HepG2 (cell line): ENCODE measurements at regions of chr16 and their contacts with region 1.

Region 1: GRCh38 chr16:87806603-87807546 is 41.1 kb upstream of the KLHDC4 start:
- DNase-seq: peak; percentile 61
- ATAC-seq: peak; percentile 71
- H3K4me3 ChIP-seq: peak overlapping the region; percentile 38 to 66 (median 50)
- H3K27ac ChIP-seq: peak overlapping the region; percentile 23
- H3K4me1 ChIP-seq: peaks cover 62% of the 10 kb centered on the region
- H3K27me3 ChIP-seq: peaks cover 0 to 11% of the 10 kb centered on the region in 2 experiments; a peak in 3 of 5 replicates
- CTCF ChIP-seq: no peak
- EP300 ChIP-seq: no peak
- POLR2A ChIP-seq: peak; percentile 42 to 68; a peak in 3 of 4 replicates
- RAD21 ChIP-seq: no peak; the same call in 1 of the 2 replicates

Region 2: DNA sequence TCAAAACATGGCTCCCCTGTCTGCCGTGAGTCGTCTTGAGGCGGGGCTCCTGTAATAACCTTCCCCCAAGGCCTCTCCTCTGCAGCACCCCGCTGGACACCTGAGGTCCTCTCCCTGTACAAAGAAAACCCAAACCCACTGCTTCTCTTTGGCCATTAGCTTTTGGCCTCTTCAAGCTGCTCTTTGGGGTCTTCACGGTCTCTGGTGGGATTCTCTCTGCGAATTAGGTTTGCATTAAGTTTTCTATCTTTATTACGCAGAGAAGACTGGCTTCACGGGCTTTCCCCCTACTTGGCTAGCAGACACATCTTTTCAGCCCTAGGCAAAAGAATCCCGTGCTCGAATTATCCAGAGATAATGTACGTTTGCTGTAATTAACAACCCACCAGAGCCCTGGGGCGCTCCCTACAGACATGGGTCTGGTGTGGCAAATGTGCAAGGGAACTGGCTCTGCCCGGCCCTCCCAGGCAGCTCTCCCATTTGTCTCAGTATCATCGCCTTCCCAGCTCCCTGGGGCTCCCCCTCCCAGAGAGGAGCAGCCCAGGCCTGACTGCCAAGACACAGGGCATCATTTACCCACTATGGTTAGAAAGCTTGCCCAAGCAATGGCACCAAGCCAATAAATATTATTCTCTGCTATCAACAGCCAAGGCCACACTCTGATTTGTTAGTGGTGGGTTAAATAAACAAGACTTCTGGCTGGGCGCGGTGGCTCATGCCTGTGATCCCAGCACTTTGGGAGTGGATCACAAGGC is 16.4 kb before region 1 on chr16:
- CTCF ChIA-PET with region 1: no interaction called
- POLR2A ChIA-PET with region 1: interaction called, 228 read pairs
- in situ Hi-C with region 1: no loop called
- intact Hi-C with region 1: no loop called
- DNase-seq: no peak
- ATAC-seq: peak; percentile 8; the same call in 2 of the 3 replicates
- H3K4me3 ChIP-seq: peak overlapping the region in 1 of 3 experiments; percentile 64; a peak in 2 of 6 replicates
- H3K27ac ChIP-seq: peak overlapping the region; percentile 88
- H3K4me1 ChIP-seq: peaks cover 77% of the 10 kb centered on the region
- H3K27me3 ChIP-seq: no peaks in the 10 kb centered on the region
- CTCF ChIP-seq: no peak
- EP300 ChIP-seq: no peak
- POLR2A ChIP-seq: no peak
- RAD21 ChIP-seq: no peak

Region 3: GRCh38 chr16:87828071-87828971 is 21.4 kb after region 1 on chr16:
- CTCF ChIA-PET with region 1: no interaction called
- POLR2A ChIA-PET with region 1: interaction called, 20 read pairs
- in situ Hi-C with region 1: no loop called
- intact Hi-C with region 1: no loop called
- DNase-seq: no peak
- ATAC-seq: peak; percentile 10
- H3K4me3 ChIP-seq: no peak overlapping the region
- H3K27ac ChIP-seq: no peak overlapping the region
- H3K4me1 ChIP-seq: peaks cover 49% of the 10 kb centered on the region
- H3K27me3 ChIP-seq: peaks cover 6 to 24% of the 10 kb centered on the region in 2 experiments; a peak in 4 of 5 replicates
- CTCF ChIP-seq: 0 out of 2 replicates have a peak, but pooled peaks have one; percentile 29
- EP300 ChIP-seq: no peak
- POLR2A ChIP-seq: peak in 1 of 2 experiments; percentile 35; a peak in 2 of 4 replicates
- RAD21 ChIP-seq: no peak

Region 4: DNA sequence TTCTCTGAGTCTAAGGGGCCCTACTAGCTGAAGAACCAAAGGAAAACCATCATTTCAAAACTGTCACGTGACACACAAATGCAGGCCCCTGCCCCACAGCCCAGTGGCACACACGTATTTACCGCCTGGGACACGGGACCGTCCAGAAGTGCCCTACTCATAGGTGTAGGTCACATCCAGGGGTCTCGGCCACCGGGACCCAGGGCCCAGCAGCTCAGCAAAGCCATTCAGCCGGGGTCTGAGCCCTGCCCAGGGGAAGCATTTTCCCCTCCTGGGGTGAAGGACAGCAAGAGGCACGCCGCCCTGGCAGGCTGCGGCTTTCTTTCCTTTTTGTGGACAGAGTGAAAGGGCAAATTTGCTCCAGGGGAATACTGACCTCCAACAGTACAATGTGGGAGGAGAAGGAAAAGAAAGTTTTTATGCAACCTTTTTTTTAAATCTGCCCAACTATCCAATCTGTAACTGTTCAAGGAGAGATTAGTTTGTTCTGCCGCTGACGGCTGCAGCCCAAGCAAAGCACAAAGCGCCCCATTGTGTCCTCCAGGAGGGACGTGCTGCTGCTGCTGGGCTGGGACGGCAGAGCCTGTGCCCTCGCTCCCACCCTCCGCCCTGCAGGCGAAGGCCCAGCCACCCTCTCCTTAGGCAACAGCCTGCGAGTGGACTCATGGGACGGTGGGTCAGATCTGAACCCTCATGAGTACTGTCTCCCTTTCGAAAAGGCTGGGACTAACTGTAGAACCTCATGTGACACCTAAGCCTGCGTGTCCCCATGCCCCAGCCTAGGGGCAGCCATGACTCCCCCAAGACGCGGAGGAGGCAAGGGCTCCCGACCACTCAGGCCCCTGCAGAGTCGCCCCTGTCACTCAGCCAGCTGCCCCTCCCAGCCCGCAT is 41.2 kb after region 1 on chr16:
- CTCF ChIA-PET with region 1: no interaction called
- POLR2A ChIA-PET with region 1: interaction called, 16 read pairs
- in situ Hi-C with region 1: no loop called
- intact Hi-C with region 1: no loop called
- DNase-seq: peak; percentile 99
- ATAC-seq: peak; percentile 85
- H3K4me3 ChIP-seq: peak overlapping the region in 2 of 3 experiments; percentile 2 to 64; a peak in 2 of 6 replicates
- H3K27ac ChIP-seq: peak overlapping the region; percentile 98
- H3K4me1 ChIP-seq: peaks cover 99% of the 10 kb centered on the region
- H3K27me3 ChIP-seq: no peaks in the 10 kb centered on the region
- CTCF ChIP-seq: peak; percentile 65
- EP300 ChIP-seq: peak; percentile 86 to 89
- POLR2A ChIP-seq: peak in 1 of 2 experiments; percentile 74; a peak in 2 of 4 replicates
- RAD21 ChIP-seq: peak; percentile 64

Region 5: DNA sequence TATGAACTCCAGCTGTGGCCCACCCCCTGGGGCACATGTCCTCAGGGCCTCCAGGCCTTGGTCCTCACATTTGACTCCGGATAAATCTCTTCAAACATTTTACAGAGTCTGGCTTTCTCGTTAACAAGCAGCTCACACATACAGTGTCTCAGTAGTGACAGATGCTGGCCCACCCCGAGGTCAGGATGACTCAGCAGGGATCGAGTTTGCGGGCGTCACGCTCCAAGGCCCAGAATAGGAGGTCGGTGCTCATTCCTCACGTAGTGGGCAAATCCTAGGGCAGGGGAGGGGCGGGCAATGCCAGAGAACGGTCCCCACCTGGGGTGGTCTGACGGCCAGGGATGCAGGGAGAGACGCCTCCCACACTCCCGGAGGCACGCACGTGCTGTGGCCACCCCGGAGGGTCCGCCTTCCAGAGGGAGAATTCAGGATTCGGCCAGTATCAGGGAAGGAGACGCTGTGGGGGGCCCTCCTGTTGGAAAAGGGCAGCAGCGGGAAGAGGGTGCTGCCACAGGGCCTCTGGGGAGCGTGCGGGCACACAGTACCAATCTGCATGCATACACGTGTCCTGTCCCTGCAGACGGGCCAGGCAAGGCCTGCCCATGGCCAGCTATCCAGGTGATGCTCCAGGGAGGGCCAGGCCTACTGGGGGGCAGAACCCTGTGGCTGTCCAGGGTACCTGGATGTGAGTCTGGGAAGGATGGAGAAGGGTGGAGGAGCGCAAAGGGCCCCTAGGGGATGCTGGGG is 53.9 kb after region 1 on chr16:
- CTCF ChIA-PET with region 1: no interaction called
- POLR2A ChIA-PET with region 1: interaction called, 14 read pairs
- in situ Hi-C with region 1: no loop called
- intact Hi-C with region 1: no loop called
- DNase-seq: peak; percentile 84
- ATAC-seq: peak; percentile 9
- H3K4me3 ChIP-seq: peak overlapping the region; percentile 6 to 66 (median 49); a peak in 5 of 6 replicates
- H3K27ac ChIP-seq: peak overlapping the region; percentile 98
- H3K4me1 ChIP-seq: peaks cover 97% of the 10 kb centered on the region
- H3K27me3 ChIP-seq: no peaks in the 10 kb centered on the region
- CTCF ChIP-seq: no peak
- EP300 ChIP-seq: peak in 1 of 2 experiments; percentile 40; a peak in 1 of 4 replicates
- POLR2A ChIP-seq: peak in 1 of 2 experiments; percentile 43; a peak in 3 of 4 replicates
- RAD21 ChIP-seq: 0 out of 2 replicates have a peak, but pooled peaks have one; percentile 7

Region 6: DNA sequence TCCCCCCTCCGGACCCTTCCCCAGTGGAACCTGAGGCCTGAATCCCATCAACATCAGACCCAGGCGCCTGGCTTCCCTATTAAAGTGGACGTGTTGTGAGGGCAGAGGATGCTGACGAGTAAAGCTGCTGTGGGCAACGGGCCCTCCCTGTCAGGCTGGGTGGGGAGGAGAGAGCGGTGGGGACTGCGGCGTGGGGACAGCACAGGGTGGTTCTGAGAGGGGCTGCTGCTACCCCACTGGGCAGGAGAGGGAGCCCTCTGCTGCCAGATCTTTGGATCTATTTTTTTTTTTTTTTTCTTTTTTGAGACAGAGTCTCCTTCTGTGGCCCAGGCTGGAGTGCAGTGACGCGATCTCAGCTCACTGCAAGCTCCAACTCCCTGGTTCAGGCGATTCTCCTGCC is 123.6 kb after region 1 on chr16:
- CTCF ChIA-PET with region 1: no interaction called
- POLR2A ChIA-PET with region 1: no interaction called
- in situ Hi-C with region 1: no loop called
- intact Hi-C with region 1: no loop called
- DNase-seq: peak; percentile 23
- ATAC-seq: peak; percentile 40
- H3K4me3 ChIP-seq: no peak overlapping the region
- H3K27ac ChIP-seq: no peak overlapping the region
- H3K4me1 ChIP-seq: peaks cover 46% of the 10 kb centered on the region
- H3K27me3 ChIP-seq: no peaks in the 10 kb centered on the region
- CTCF ChIP-seq: peak; percentile 56
- EP300 ChIP-seq: no peak
- POLR2A ChIP-seq: no peak
- RAD21 ChIP-seq: peak; percentile 36; the same call in 1 of the 2 replicates